HCT116 (cell line): ENCODE measurements at regions of chr1 and their contacts with region 1.

Region 1: GRCh38 chr1:216750012-216750627 is 26.9 kb upstream of the ESRRG start:
- DNase-seq: no peak
- ATAC-seq: no peak; the same call in 1 of the 2 replicates
- H3K4me3 ChIP-seq: no peak overlapping the region
- H3K27ac ChIP-seq: no peak overlapping the region
- H3K4me1 ChIP-seq: no peaks in the 10 kb centered on the region
- H3K27me3 ChIP-seq: no peaks in the 10 kb centered on the region; the same call in 1 of the 2 replicates
- CTCF ChIP-seq: peak in 2 of 3 experiments; percentile 27 to 50; a peak in 4 of 6 replicates
- POLR2A ChIP-seq: no peak
- RAD21 ChIP-seq: peak; percentile 43

Region 2: DNA sequence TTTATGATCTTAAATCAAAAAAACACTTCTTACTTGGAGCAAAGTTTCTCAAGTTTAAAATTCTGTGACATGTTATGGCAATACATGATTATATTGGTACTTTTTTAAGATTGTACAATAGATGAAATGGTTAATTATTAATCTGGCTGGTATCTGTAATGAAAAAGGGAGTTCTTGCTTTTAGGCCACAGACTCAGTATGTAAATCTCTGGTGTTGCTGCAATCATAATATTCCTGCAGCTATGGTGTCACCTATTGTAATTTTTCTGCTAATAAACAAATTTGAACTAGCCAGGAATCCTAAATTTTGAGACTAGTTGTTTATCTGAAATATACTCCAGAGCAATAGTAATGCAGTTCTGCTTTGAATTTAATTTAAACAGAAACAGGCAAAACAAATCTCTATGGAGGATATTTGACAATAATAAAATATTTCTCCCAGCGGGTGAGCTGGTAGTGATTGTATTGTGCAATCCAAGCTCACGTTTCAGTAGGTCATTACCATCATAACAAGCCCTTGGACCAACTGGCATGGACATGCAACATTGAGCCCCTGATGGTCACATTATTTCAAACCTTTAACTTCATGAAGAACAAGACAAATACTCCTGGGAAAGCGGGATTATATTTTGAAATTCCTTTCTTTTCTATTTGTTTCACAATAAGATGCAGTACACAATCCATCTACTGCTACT is 249.7 kb before region 1 on chr1:
- CTCF ChIA-PET with region 1: no interaction called
- POLR2A ChIA-PET with region 1: no interaction called
- RAD21 ChIA-PET with region 1: no interaction called
- intact Hi-C with region 1: no loop called
- DNase-seq: no peak
- ATAC-seq: no peak
- H3K4me3 ChIP-seq: no peak overlapping the region
- H3K27ac ChIP-seq: no peak overlapping the region
- H3K4me1 ChIP-seq: no peaks in the 10 kb centered on the region
- H3K27me3 ChIP-seq: no peaks in the 10 kb centered on the region
- CTCF ChIP-seq: no peak
- POLR2A ChIP-seq: no peak
- RAD21 ChIP-seq: no peak

Region 3: DNA sequence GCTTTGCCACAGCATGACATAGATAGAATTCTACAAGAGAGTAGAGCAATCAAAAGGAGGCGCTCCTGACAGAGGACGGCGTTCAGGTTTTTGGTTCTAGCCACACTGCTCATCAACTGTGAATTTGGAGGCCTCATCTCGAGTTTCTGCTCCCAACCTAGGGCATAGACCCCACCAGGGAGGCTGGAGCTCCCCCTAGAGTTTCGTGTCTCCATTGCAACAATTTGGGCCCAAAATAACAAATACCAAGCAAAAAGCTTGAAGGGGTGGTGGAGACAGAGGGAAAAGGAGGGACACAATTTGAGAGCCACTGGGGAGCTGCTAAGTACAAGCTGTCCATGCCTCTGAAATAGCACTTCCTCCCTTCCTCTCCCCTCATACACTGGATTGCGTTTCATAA is 583.8 kb after region 1 on chr1:
- CTCF ChIA-PET with region 1: no interaction called
- POLR2A ChIA-PET with region 1: no interaction called
- RAD21 ChIA-PET with region 1: no interaction called
- intact Hi-C with region 1: loop called (anchors 5 kb)
- DNase-seq: peak; percentile 7
- ATAC-seq: peak; percentile 82
- H3K4me3 ChIP-seq: no peak overlapping the region
- H3K27ac ChIP-seq: no peak overlapping the region
- H3K4me1 ChIP-seq: no peaks in the 10 kb centered on the region
- H3K27me3 ChIP-seq: no peaks in the 10 kb centered on the region
- CTCF ChIP-seq: peak; percentile 32 to 80 (median 68); a peak in 5 of 6 replicates
- POLR2A ChIP-seq: no peak
- RAD21 ChIP-seq: peak; percentile 72